ENCODE measurements at regions of chr7 and their contacts with region 1.

Region 1: DNA sequence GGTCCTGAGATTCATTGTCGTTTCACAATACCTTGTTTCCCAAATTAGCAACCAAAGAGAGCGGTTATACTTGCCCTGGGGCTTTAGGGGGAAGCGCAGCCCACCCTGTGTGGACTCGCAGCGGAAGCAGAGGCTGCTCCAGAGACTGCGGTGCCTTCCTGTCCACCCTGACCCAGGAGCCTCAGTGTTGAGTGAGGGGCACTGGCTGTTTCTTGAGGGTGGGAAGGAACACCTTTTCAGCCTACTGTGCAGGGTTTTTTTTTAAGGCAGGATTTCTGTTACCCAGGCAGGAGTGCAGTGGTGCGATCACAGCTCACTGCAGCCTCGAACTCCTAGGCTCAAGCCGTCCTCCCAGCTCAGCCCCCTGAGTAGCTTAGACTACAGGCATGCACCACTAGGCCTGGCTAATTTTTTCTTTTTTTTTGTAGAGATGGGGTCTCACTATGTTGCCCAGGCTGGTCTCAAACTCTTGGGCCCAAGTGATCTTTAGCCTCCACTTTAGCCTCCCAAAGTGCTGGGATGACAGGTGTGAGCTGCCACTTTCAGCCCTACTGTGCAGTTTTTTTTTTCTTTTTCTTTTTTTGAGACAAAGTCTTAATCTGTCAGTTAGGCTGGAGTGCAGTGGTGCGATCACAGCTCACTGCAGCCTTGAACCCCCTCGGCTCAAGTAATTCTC is 67.1 kb downstream of the DNAJB6 start:
- DNase-seq: no peak
- ATAC-seq: no peak
- H3K4me3 ChIP-seq: no peak overlapping the region
- H3K27ac ChIP-seq: no peak overlapping the region
- H3K4me1 ChIP-seq: peaks cover 14% of the 10 kb centered on the region
- H3K27me3 ChIP-seq: no peaks in the 10 kb centered on the region
- CTCF ChIP-seq: no peak

Region 2: GRCh38 chr7:157422279-157422678 is 18.4 kb after region 1 on chr7:
- CTCF ChIA-PET with region 1: no interaction called
- POLR2A ChIA-PET with region 1: interaction called, 10 read pairs
- in situ Hi-C with region 1: no loop called
- intact Hi-C with region 1: no loop called
- DNase-seq: no peak
- ATAC-seq: no peak
- H3K4me3 ChIP-seq: no peak overlapping the region
- H3K27ac ChIP-seq: no peak overlapping the region
- H3K4me1 ChIP-seq: no peaks in the 10 kb centered on the region; the same call in 1 of the 2 replicates
- H3K27me3 ChIP-seq: no peaks in the 10 kb centered on the region
- CTCF ChIP-seq: no peak